ENCODE measurements at regions of chr12 and their contacts with region 1.

Region 1: GRCh38 chr12:48165094-48165981 is 8.0 kb upstream of the ASB8 start:
- DNase-seq: peak; percentile 34
- H3K4me3 Mint-ChIP-seq: no peak overlapping the region
- H3K27ac Mint-ChIP-seq: no peak overlapping the region
- H3K4me1 Mint-ChIP-seq: peaks cover 6% of the 10 kb centered on the region
- H3K27me3 Mint-ChIP-seq: peaks cover 23% of the 10 kb centered on the region

Region 2: DNA sequence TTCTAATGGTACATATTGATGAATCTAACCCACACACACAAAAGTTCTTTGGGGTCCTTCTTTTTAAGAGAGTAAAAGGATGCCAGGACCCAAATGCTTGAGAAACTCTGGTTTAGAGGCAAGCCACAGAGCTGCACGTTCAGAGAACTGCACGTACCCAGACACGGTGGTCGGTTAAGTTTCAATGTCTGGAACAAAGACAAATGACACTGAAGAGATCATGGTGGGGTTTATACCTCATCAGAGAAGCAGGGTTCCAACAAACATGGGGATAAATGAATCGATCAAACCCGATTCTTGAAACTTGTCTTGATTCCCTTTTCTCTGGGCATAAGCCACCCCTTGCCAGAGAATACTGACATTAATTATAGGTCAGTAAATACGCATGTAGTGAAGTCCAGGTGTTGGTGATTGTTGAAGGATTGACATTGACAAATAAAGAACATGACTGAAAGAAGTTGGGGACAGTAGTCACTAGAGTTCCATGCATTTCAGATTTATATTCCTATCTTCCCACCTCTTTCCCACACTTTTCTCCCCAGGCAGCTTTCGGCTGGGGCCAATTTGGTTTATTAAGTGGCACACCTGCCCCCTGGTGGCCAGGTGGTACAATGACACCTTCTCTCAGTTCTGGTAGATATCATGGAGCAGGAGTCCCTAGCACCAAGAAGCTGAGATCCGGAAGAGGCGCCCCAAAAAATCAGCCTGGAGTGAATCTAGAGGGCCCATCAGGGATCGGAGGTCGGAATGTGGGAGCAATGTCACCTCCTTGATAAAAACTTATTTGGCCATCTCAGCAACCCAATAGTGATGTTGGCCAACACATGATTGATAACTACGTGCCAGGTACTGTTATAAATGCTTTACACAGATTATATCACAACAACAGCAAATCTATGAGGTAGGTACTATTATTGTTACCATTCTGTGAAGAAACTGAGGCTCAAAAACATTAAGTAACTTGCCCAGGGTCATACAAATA is 327.9 kb before region 1 on chr12:
- intact Hi-C with region 1: loop called (anchors 5 kb)
- DNase-seq: peak; percentile 41
- H3K4me3 Mint-ChIP-seq: no peak overlapping the region
- H3K27ac Mint-ChIP-seq: peak overlapping the region; percentile 67
- H3K4me1 Mint-ChIP-seq: peaks cover 84% of the 10 kb centered on the region
- H3K27me3 Mint-ChIP-seq: no peaks in the 10 kb centered on the region

Region 3: DNA sequence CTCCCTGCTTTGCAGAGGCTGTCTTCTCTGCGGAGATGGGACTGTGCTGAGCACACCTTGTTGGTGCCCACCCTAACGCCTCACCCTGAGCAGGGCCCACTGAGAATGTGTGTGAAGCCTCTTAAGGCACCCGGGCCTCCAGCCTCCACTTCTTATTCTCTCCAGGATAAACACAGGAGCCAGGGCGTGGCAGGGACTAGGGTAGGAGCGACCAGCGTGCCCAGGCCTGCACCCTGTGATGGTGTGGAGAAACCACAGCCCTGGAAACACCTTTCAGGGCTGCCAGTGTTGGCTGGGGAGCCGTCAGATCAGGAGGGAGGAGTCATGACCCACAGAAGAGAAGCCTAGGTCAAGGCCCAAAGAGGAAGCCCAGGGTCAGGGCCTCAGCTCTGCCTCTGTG is 301.9 kb before region 1 on chr12:
- intact Hi-C with region 1: loop called (anchors 2 kb)
- DNase-seq: no peak
- H3K4me3 Mint-ChIP-seq: no peak overlapping the region
- H3K27ac Mint-ChIP-seq: peak overlapping the region; percentile 80
- H3K4me1 Mint-ChIP-seq: peaks cover 92% of the 10 kb centered on the region
- H3K27me3 Mint-ChIP-seq: no peaks in the 10 kb centered on the region

Region 4: DNA sequence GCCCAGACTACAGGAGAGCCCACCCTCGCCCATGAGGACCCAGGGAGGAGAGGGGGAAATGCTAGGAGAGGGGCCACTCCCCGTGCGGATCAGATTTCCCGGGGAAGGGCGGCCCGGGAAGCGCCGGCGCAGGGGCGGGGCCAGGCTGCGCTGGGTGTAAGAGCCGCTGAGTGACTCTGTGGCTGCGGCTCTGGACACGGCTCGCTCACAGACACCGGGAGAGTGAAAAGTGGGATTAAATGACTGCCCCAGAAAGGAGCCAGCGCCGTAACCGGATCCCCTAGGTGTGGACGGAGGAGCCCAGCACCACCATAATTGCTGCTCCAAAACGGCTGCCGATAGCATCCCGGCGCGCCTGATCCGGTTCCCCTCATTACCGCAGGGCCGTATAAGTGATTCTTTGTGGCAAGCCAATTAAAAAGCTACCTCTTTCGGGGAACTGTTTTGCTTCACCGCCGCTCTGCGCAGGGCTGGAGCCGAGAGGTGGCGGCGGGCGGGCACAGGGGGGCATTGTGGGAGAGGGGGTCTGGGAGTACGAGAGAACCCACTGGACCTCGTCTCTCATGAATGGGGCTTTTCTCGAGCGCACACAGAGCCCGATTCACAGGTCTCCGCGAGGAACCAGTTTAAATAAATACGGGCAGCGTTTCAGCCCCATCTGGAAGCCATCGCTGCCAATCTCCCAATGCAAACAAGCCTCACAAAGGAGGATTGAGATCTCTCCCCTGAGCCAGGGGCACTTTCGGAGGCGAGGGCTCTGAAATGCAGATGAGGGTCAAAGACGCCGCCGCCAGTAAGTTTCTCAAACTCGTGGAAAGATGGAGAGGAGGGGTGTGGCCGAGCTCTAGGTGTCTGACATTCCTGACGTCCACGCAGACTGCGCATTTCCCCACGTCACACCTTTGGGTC is 163.6 kb before region 1 on chr12:
- intact Hi-C with region 1: loop called (anchors 5 kb)
- DNase-seq: no peak
- H3K4me3 Mint-ChIP-seq: peak overlapping the region; percentile 54
- H3K27ac Mint-ChIP-seq: peak overlapping the region; percentile 36
- H3K4me1 Mint-ChIP-seq: peaks cover 32% of the 10 kb centered on the region
- H3K27me3 Mint-ChIP-seq: peaks cover 87% of the 10 kb centered on the region

Region 5: DNA sequence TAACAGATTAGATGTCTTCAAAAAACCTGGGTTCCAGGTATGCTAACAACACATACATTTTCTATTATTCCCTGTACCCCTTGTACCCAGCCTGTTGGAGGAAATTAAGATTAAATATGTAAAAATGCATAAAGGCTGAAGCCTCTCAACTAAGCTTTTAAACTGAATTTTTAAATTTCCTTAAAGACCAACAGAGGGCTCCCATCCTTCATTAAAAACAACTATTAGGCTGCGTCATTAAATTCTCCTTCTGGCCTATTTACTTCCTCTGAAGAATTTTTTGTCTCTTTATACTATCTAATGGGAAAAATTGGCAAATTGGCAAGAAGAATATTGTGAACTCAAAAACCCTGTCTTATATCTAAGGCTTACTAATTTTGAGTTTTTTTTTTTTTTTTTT is 81.3 kb before region 1 on chr12:
- intact Hi-C with region 1: loop called (anchors 2 kb)
- DNase-seq: no peak
- H3K4me3 Mint-ChIP-seq: no peak overlapping the region
- H3K27ac Mint-ChIP-seq: no peak overlapping the region
- H3K4me1 Mint-ChIP-seq: no peaks in the 10 kb centered on the region
- H3K27me3 Mint-ChIP-seq: no peaks in the 10 kb centered on the region

Region 6: DNA sequence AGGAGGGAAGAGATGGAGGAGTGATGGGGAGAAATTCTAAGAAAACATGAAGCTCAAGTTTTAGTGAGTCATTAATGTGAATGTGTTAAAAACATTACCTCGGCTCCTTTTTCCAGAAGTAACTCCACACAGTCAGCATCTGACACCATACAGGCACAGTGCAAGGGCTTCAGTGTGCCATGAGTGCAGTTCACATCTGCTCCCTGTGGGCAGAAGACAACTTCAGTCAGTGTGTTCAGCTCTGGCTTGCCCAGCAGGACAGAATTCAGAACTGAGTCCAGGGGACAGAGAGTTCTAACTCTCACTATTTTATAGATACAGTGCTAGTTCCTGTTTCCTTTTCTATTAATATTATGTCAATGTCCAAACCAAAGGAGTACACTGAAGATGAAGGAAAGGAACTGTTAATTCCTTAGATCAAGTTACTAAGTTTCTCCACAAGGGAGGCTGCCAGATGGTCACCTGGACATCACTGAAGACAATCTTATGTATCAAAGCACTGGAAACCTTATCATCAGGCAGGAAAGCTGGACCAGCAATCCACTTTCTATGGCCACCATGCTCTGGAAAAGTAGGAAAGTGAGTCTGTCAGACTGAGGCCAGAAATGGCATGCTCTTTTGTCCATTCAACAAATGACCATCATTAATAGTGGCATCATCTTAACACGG is 14.1 kb before region 1 on chr12:
- intact Hi-C with region 1: no loop called
- DNase-seq: no peak
- H3K4me3 Mint-ChIP-seq: no peak overlapping the region
- H3K27ac Mint-ChIP-seq: no peak overlapping the region
- H3K4me1 Mint-ChIP-seq: peaks cover 2% of the 10 kb centered on the region
- H3K27me3 Mint-ChIP-seq: no peaks in the 10 kb centered on the region

Region 7: GRCh38 chr12:48189331-48190125 is 24.2 kb after region 1 on chr12:
- intact Hi-C with region 1: loop called (anchors 2 kb)
- DNase-seq: peak; percentile 60
- H3K4me3 Mint-ChIP-seq: no peak overlapping the region
- H3K27ac Mint-ChIP-seq: no peak overlapping the region
- H3K4me1 Mint-ChIP-seq: peaks cover 13% of the 10 kb centered on the region
- H3K27me3 Mint-ChIP-seq: peaks cover 59% of the 10 kb centered on the region